CD14-positive monocyte (primary cell): ENCODE measurements at regions of chr15 and their contacts with region 1.

Region 1: DNA sequence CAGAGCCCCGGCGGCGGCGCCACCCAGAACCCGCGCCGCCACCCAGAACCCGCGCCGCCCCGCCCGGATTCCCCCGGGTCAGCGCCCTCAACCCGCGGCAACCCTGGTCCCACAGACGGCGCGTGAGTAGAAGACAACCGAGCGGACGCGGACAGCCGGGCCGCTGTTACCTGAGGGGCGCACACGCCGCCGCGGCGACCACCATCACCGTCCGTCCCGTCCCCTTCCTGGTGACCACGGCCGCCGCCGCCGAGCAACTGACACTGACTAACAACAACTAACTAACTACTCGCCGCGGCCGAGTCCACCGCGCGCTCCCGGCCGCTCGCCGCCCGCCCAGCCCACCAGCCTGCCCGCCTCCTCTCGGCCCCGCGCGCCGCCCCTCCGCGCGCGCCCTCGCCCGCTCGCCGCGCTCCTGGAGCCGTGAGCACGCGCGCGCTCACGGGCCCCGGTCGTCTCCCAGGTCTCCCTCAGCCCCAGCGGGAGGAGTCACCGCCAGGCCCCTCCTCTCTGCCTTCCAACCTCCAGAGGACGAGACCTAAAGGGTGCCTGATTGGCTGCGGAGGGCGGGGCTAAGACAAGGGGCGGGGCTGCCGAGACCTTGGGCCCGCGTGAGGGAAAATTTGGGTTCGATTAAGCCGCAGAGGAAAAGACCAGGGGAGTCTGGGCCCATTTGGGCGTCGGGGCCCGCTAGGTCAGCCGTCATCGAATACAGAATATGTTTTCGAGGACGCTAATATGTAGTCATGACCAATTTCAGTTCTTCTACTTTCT is at the start of gene PEAK1:
- DNase-seq: peak; percentile 96 to 99 (median 98)
- H3K4me3 ChIP-seq: peak within 1 kb of the TSS; percentile 79 to 98 (median 91)
- H3K4me3 Mint-ChIP-seq: peak within 1 kb of the TSS; percentile 94 to 98
- H3K27ac ChIP-seq: peak within 1 kb of the TSS; percentile 83 to 96
- H3K27ac Mint-ChIP-seq: peak within 1 kb of the TSS; percentile 93 to 97 (median 95)
- H3K4me1 ChIP-seq: peaks cover 34 to 48% of the 10 kb centered on the region in 2 donors
- H3K4me1 Mint-ChIP-seq: peaks cover 34% of the 10 kb centered on the region
- H3K27me3 ChIP-seq: peaks cover 0 to 2% of the 10 kb centered on the region in 2 donors
- H3K27me3 Mint-ChIP-seq: peaks cover 0 to 8% (median 6%) of the 10 kb centered on the region in 3 donors
- CTCF ChIP-seq: no peak
- polyA plus RNA-seq, gene PEAK1: 0.85 to 8.7 (median 1.1) TPM

Region 2: DNA sequence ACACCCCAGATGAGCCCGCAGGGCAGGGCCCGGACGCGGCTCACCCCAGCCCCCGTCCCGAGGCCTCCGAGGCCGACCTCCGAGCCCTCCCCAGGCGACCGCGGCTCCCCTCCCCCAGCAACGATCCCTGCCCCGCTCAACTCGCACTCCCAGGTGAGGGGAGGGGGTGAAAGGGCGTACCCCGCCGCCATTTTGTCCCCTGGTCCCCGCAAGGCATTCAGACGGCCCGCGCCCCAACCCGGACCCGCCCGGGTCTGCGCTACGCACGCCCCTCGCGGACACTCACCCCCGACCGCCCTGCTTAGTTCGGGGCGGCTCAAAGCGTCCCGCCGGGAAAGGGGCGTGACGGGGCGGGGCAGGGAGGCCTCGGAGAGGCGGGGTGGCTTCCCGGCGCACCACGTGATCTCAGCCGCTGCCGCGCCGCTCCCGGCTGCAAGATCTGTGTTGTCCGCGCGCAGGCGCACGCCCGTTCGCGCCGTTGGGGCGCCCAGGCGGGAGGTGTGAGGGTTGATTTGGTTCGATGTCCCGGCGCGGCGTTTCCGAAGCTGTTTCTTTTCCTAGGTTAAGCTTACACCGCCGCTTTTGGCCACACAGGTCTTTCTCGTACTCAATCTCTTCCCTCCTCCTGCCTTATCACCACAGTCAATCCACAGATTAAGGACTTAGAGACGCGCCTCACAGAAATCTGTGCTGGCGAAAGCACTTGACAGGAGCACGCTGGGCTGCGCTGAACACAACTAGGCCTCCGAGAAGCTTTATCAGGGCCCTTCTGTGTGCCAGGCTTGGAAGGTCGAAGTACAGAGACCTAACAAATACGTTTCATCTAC is 514.8 kb before region 1 on chr15 and contains the start of gene SCAPER:
- intact Hi-C with region 1: loop called in 1 of 2 experiments (anchors 10 kb)
- DNase-seq: peak; percentile 83 to 86 (median 84)
- H3K4me3 ChIP-seq: peak within 1 kb of the TSS; percentile 80 to 90 (median 88)
- H3K4me3 Mint-ChIP-seq: peak within 1 kb of the TSS; percentile 94 to 98
- H3K27ac ChIP-seq: peak within 1 kb of the TSS; percentile 21 to 90
- H3K27ac Mint-ChIP-seq: peak within 1 kb of the TSS; percentile 83 to 94 (median 89)
- H3K4me1 ChIP-seq: peaks cover 34 to 51% of the 10 kb centered on the region in 2 donors
- H3K4me1 Mint-ChIP-seq: peaks cover 43% of the 10 kb centered on the region
- H3K27me3 ChIP-seq: no peaks in the 10 kb centered on the region
- H3K27me3 Mint-ChIP-seq: peaks cover 3 to 9% (median 4%) of the 10 kb centered on the region in 3 donors
- CTCF ChIP-seq: no peak
- polyA plus RNA-seq, gene SCAPER: 2.5 to 5.4 (median 4.2) TPM

Region 3: GRCh38 chr15:76931397-76932007 is 488.5 kb before region 1 on chr15 and contains the start of gene RCN2:
- intact Hi-C with region 1: loop called in 1 of 2 experiments (anchors 5 kb)
- DNase-seq: peak; percentile 91 to 93 (median 91)
- H3K4me3 ChIP-seq: peak within 1 kb of the TSS; percentile 55 to 97 (median 79)
- H3K4me3 Mint-ChIP-seq: peak within 1 kb of the TSS; percentile 85 to 94
- H3K27ac ChIP-seq: peak within 1 kb of the TSS in 1 of 2 donors; percentile 67
- H3K27ac Mint-ChIP-seq: peak within 1 kb of the TSS; percentile 59 to 86 (median 79)
- H3K4me1 ChIP-seq: peaks cover 17% of the 10 kb centered on the region in 2 donors
- H3K4me1 Mint-ChIP-seq: peaks cover 19% of the 10 kb centered on the region
- H3K27me3 ChIP-seq: no peaks in the 10 kb centered on the region
- H3K27me3 Mint-ChIP-seq: peaks cover 0 to 4% (median 3%) of the 10 kb centered on the region in 3 donors
- CTCF ChIP-seq: no peak
- polyA plus RNA-seq, gene RCN2: 7.1 to 16.4 (median 13.2) TPM

Region 4: GRCh38 chr15:77162872-77163633 is 257.0 kb before region 1 on chr15:
- intact Hi-C with region 1: no loop called
- DNase-seq: peak; percentile 30 to 64 (median 51)
- H3K4me3 ChIP-seq: no peak overlapping the region
- H3K4me3 Mint-ChIP-seq: no peak overlapping the region
- H3K27ac ChIP-seq: no peak overlapping the region
- H3K27ac Mint-ChIP-seq: peak overlapping the region in 2 of 7 donors; percentile 30 to 46
- H3K4me1 ChIP-seq: peaks cover 5 to 12% of the 10 kb centered on the region in 2 donors
- H3K4me1 Mint-ChIP-seq: peaks cover 17% of the 10 kb centered on the region
- H3K27me3 ChIP-seq: no peaks in the 10 kb centered on the region
- H3K27me3 Mint-ChIP-seq: no peaks in the 10 kb centered on the region
- CTCF ChIP-seq: no peak

Region 5: DNA sequence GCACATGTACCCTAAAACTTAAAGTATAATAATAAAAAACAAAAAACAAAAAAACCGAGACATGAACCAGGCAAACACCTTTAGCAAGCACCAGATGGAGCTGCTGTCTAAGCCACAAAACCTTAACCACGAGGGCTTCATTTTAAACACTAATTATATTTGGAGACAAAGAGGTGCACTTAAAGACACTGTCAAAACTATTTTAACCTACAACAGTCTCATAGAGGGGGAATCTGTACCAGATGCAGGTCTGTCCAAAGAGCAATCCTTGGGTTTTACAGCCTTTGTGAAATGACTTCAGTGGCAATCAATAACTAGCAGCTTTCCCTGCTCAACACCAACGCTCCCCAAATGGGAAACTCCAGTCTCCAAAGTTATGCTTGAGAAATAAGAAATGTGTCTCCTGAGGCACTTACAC is 233.4 kb before region 1 on chr15:
- intact Hi-C with region 1: loop called in 1 of 2 experiments (anchors 10 kb)
- DNase-seq: peak in 1 of 3 donors; percentile 16
- H3K4me3 ChIP-seq: no peak overlapping the region
- H3K4me3 Mint-ChIP-seq: no peak overlapping the region
- H3K27ac ChIP-seq: no peak overlapping the region
- H3K27ac Mint-ChIP-seq: peak overlapping the region in 2 of 7 donors; percentile 6 to 25
- H3K4me1 ChIP-seq: peaks cover 29 to 41% of the 10 kb centered on the region in 2 donors
- H3K4me1 Mint-ChIP-seq: peaks cover 45% of the 10 kb centered on the region
- H3K27me3 ChIP-seq: no peaks in the 10 kb centered on the region
- H3K27me3 Mint-ChIP-seq: peaks cover 2% of the 10 kb centered on the region in 3 donors
- CTCF ChIP-seq: peak; percentile 15